Adrenal gland (tissue), 19 donors: ENCODE measurements at regions of chr20 and their contacts with region 1.

Region 1: DNA sequence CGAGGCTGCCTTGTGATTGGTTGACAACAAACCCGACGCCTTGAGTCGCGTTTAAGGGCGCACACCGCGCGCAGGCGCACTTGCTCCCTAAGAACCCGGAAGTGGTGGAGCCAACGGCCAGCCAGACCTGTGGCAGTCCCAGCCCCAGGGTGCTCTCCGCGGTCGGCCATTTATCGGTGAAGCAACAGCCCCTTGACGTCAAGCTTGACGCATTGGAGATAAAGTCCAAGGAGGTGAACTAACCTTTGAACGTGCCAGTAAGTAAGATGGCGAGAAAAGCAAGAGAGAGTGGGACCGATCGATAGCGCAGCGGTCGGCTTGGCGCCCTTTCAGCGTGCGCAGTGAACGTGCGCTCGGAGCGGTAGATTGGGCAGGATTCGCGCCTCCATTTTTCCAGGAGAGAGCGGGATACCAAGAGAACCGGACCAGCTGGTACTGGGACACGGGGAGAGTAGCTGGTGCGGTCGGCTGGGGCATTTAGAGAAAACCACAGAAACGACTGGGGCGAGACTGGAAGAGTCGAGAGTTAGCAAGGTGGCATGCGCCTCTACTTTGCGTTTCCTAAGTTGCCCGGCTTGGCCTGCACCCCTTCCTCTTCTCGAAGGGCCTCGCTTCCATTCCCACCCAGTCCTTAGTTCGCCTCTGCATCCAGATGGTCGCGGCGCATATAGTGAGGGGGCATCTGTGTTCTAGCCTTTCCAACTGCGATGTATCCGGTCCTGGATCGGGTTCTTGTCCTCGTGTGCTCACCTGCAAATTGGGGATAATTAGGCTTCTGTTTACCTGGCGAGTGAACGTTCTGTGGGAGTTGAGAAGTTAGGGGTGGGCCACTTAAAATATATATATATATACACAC is at the start of gene CSTF1:
- DNase-seq: peak; percentile 99 to 100 (median 99)
- H3K4me3 ChIP-seq: peak within 1 kb of the TSS; percentile 17 to 83 (median 64)
- H3K27ac ChIP-seq: peak within 1 kb of the TSS; percentile 43 to 94 (median 68)
- H3K4me1 ChIP-seq: peaks cover 11 to 29% of the 10 kb centered on the region in 2 donors
- H3K27me3 ChIP-seq: no peaks in the 10 kb centered on the region
- CTCF ChIP-seq: no peak
- POLR2A ChIP-seq: peak in 1 of 2 donors; percentile 30
- total RNA-seq, gene CSTF1: 28.7 to 53.1 (median 33.5) TPM

Region 2: GRCh38 chr20:56468316-56469082 is 76.0 kb after region 1 on chr20 and contains the start of gene RTF2:
- intact Hi-C with region 1: loop called (anchors 5 to 10 kb)
- DNase-seq: peak; percentile 91 to 96 (median 93)
- H3K4me3 ChIP-seq: peak within 1 kb of the TSS; percentile 19 to 89 (median 79)
- H3K27ac ChIP-seq: peak within 1 kb of the TSS in 4 of 5 donors; percentile 64 to 92 (median 70)
- H3K4me1 ChIP-seq: peaks cover 7 to 21% of the 10 kb centered on the region in 2 donors
- H3K27me3 ChIP-seq: no peaks in the 10 kb centered on the region
- CTCF ChIP-seq: no peak
- POLR2A ChIP-seq: peak in 1 of 2 donors; percentile 23
- total RNA-seq, gene RTF2: 68.9 to 115 (median 95.7) TPM

Region 3: DNA sequence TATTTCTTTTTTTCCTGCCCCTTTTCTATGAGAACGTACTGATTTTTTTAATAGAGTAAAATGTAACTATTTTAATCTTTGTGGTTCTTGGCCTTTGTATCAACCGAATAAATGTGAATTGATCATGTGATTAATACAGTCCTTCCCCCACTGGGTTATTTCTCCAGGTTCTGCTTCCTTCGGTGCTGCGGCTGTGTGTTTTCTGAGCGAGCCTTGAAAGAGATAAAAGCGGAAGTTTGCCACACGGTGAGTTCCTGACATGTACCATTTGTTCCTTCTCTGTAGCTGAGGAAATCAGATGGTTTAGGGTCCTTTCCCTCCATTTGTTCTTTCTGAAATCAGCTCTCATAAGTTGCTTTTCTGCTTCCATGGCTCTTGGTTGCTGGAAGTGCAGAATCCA is 91.4 kb after region 1 on chr20:
- intact Hi-C with region 1: loop called in 1 of 2 experiments (anchors 5 kb)
- DNase-seq: no peak
- H3K4me3 ChIP-seq: no peak overlapping the region
- H3K27ac ChIP-seq: no peak overlapping the region
- H3K4me1 ChIP-seq: no peaks in the 10 kb centered on the region
- H3K27me3 ChIP-seq: no peaks in the 10 kb centered on the region
- CTCF ChIP-seq: no peak
- POLR2A ChIP-seq: no peak

Region 4: GRCh38 chr20:56735191-56735711 is 342.7 kb after region 1 on chr20:
- intact Hi-C with region 1: no loop called
- DNase-seq: peak in 1 of 7 donors; percentile 59
- H3K4me3 ChIP-seq: no peak overlapping the region
- H3K27ac ChIP-seq: no peak overlapping the region
- H3K4me1 ChIP-seq: no peaks in the 10 kb centered on the region
- H3K27me3 ChIP-seq: peaks cover 5% of the 10 kb centered on the region
- CTCF ChIP-seq: no peak
- POLR2A ChIP-seq: no peak